Activated T-helper 2 cell treated with anti-CD3 and anti-CD28 coated beads, Interferon-gamma antibody, Interleukin-2, Interleukin-4, amounts not matched to agents 10 μg/mL and 5 μg/mL and 100 μg/mL, durations not matched to agents 14 hours and 24 hours and 36 hours (primary cell): ENCODE measurements at regions of chr10 and their contacts with region 1.

Region 1: DNA sequence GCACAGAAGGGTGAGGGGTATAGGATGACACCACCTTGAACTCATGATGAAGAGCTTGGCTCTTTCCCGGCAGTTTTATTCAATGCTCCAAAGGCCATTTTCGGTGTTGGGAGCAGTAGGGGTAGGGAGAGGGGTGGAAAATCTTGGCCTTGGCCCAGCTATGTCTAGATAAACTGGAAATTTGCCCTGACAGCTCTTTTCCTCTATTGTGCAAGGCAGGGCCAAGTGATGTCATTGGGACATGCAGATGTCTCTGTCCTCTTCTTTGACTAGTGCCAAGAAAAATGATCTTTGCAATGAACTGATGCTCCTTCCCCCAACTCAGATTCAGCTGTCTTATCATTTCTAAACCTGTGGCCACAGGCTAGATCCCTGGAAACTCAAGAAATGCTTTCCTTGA is 27.7 kb upstream of the PRKCQ start:
- DNase-seq: no peak
- H3K4me3 Mint-ChIP-seq: no peak overlapping the region
- H3K27ac Mint-ChIP-seq: no peak overlapping the region
- H3K4me1 Mint-ChIP-seq: peaks cover 69% of the 10 kb centered on the region
- H3K27me3 Mint-ChIP-seq: no peaks in the 10 kb centered on the region

Region 2: GRCh38 chr10:6275022-6275997 is 332.5 kb before region 1 on chr10:
- intact Hi-C with region 1: loop called (anchors 10 kb)
- DNase-seq: peak; percentile 79
- H3K4me3 Mint-ChIP-seq: peak overlapping the region; percentile 76
- H3K27ac Mint-ChIP-seq: peak overlapping the region; percentile 97
- H3K4me1 Mint-ChIP-seq: peaks cover 54% of the 10 kb centered on the region
- H3K27me3 Mint-ChIP-seq: no peaks in the 10 kb centered on the region

Region 3: GRCh38 chr10:6593241-6593671 is 14.5 kb before region 1 on chr10:
- intact Hi-C with region 1: loop called (anchors 1 kb)
- DNase-seq: no peak
- H3K4me3 Mint-ChIP-seq: peak overlapping the region; percentile 31
- H3K27ac Mint-ChIP-seq: peak overlapping the region; percentile 65
- H3K4me1 Mint-ChIP-seq: peaks cover 81% of the 10 kb centered on the region
- H3K27me3 Mint-ChIP-seq: no peaks in the 10 kb centered on the region